ENCODE measurements at regions of chr17 and their contacts with region 1.

Region 1: DNA sequence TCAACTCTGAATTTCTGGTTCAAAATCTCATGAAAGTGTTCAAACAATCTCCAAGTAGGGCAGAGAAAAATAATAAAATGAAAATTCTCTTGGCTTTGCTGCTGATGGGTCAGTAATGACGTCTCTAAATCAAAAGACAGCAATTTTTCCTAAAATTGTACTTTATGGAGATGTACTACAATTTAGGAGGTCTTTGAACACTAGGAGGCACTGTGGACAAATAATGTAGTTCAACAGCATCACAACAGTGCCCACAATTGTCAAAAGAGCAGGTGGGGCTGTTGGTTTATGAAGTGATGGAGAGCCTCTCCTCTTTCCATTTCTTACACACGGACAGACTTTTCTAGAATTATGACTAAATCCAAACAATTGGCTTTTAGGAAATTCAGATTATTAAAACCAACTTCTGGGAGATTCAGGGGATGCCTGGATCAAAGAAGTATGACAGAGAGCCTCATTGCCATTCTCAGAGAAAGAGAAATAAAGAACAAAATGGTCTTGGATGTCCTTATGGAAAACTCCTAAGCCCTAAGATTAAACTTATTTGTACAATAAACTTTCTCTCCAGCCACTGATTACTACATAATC is 23.8 kb downstream of the EZH1 start:
- DNase-seq: peak; percentile 70
- CTCF ChIP-seq: peak; percentile 69

Region 2: DNA sequence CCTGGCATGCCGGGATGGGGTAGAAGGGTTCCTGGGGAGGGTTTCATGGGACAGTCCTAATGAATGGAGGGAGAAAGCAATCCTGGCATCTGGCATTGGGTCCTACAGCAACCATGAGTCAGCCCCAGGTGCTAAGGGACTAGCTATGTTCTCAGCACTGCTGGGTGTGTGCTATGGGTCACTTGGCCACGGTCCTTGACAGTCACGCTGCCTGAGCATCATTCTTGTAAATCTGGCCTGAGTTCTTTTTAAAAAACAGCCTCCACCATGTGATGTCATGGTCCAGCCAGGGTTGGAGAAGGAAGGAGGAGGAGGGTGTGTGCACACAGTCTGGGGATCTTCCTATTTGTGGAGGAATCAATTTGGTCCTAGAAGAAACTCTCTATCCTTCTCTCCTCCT is 33.7 kb after region 1 on chr17:
- in situ Hi-C with region 1: loop called (anchors 5 kb)
- DNase-seq: no peak
- CTCF ChIP-seq: no peak